ENCODE measurements at regions of chr4 and their contacts with region 1.

Region 1: GRCh38 chr4:74376888-74377483 is 12.0 kb downstream of the EREG start:
- DNase-seq: no peak
- ATAC-seq: peak; percentile 73

Region 2: GRCh38 chr4:74197080-74197479 is 179.9 kb before region 1 on chr4:
- intact Hi-C with region 1: no loop called
- DNase-seq: no peak
- ATAC-seq: no peak

Region 3: GRCh38 chr4:74531963-74532794 is 155.2 kb after region 1 on chr4:
- intact Hi-C with region 1: loop called (anchors 2 kb)
- DNase-seq: no peak
- ATAC-seq: peak; percentile 71